Mammary epithelial cell (primary cell): ENCODE measurements at regions of chr5 and their contacts with region 1.

Region 1: GRCh38 chr5:82413302-82414040 is 135.3 kb upstream of the RPS23 start:
- DNase-seq: peak; percentile 92
- H3K4me3 ChIP-seq: no peak overlapping the region
- H3K27ac ChIP-seq: peak overlapping the region; percentile 72
- H3K4me1 ChIP-seq: peaks cover 28% of the 10 kb centered on the region
- H3K27me3 ChIP-seq: no peaks in the 10 kb centered on the region
- CTCF ChIP-seq: no peak

Region 2: DNA sequence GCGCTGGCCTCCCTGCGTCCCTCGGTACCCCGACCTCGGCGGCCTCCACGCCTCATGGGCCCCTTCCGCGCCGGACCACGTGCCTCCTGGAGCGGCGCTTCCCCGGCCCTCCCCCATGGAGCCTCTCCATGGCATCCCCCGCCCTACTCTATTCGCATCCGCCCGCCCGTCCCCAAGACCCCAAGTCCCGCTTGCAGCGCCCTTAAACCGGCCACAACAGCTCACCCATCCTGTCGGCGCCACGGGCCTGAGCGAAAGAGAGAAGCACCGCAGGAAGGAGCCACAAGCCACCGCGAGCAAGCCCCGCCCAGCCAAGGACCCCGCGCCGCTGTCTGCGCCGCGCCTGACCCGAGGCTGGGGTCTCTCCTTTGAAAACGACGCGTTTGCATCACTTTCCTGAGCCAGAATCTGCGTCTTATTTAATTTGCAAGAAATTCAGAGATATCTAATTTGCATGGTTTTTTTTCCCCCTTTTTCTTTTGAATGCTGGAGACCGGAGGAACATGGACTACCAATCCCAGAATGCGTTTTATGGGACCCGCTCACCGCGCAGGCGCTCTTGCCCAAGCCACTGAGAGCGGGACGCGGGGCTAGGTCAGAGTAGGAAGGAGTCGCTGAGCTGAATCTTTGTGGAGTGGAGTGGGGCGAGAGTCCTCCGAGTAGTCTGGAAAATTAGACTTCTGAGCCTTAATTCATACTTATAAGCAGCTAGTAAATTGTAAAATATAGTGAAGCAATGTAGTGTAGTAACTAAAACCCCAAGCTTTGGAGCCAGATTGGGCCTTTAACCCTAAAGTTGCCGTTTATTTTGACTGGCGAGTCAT is 135.2 kb before region 1 on chr5 and contains the start of gene RPS23:
- CTCF ChIA-PET with region 1: no interaction called
- dilution Hi-C with region 1: no loop called
- in situ Hi-C with region 1: no loop called
- intact Hi-C with region 1: no loop called
- DNase-seq: peak; percentile 86
- H3K4me3 ChIP-seq: peak within 1 kb of the TSS; percentile 60 to 98 (median 97)
- H3K27ac ChIP-seq: peak within 1 kb of the TSS; percentile 93
- H3K4me1 ChIP-seq: peaks cover 19% of the 10 kb centered on the region
- H3K27me3 ChIP-seq: no peaks in the 10 kb centered on the region
- CTCF ChIP-seq: no peak
- total RNA-seq, gene RPS23: 1,263 to 1,505 TPM

Region 3: GRCh38 chr5:82356808-82357671 is 56.4 kb before region 1 on chr5:
- CTCF ChIA-PET with region 1: no interaction called
- dilution Hi-C with region 1: loop called (anchors 5 kb)
- in situ Hi-C with region 1: no loop called
- intact Hi-C with region 1: no loop called
- DNase-seq: peak; percentile 99
- H3K4me3 ChIP-seq: no peak overlapping the region
- H3K27ac ChIP-seq: peak overlapping the region; percentile 73
- H3K4me1 ChIP-seq: peaks cover 11% of the 10 kb centered on the region
- H3K27me3 ChIP-seq: no peaks in the 10 kb centered on the region
- CTCF ChIP-seq: no peak

Region 4: GRCh38 chr5:82466986-82467561 is 53.6 kb after region 1 on chr5:
- CTCF ChIA-PET with region 1: no interaction called
- dilution Hi-C with region 1: no loop called
- in situ Hi-C with region 1: no loop called
- intact Hi-C with region 1: no loop called
- DNase-seq: no peak
- H3K4me3 ChIP-seq: no peak overlapping the region
- H3K27ac ChIP-seq: no peak overlapping the region
- H3K4me1 ChIP-seq: no peaks in the 10 kb centered on the region
- H3K27me3 ChIP-seq: no peaks in the 10 kb centered on the region
- CTCF ChIP-seq: no peak

Region 5: DNA sequence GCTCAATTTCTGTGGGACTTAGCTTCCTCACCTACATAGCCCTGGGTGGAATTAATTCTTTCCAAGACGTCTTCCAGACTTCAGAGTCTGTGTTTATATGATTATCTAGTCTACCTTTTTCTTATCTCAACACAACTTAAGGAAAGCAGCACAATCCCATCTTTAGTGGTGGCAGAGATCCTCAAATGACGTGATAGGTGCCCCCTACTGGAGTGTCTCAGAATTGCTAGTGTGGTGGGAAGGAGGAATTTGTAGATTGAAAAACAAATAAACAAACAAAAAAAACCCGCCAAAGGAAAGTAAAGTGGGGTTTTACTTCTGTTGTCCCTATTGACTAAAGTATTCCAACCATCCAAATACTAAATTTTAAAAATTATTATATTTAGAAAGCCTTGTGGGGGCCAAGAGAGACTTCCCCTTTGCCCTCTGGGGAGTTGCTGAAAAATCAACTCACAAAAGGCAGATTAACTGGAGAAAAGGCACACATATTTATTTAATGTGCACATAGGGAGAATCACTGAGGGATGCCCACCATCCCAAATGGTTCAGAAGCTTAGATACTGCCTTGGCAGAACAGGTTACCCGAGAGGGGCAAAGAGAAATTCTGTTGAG is 380.4 kb after region 1 on chr5:
- CTCF ChIA-PET with region 1: no interaction called
- dilution Hi-C with region 1: no loop called
- in situ Hi-C with region 1: no loop called
- intact Hi-C with region 1: no loop called
- DNase-seq: no peak
- H3K4me3 ChIP-seq: no peak overlapping the region
- H3K27ac ChIP-seq: no peak overlapping the region
- H3K4me1 ChIP-seq: peaks cover 3% of the 10 kb centered on the region
- H3K27me3 ChIP-seq: no peaks in the 10 kb centered on the region
- CTCF ChIP-seq: peak; percentile 73 to 74

Region 6: GRCh38 chr5:83133797-83134196 is 720.3 kb after region 1 on chr5:
- CTCF ChIA-PET with region 1: no interaction called
- dilution Hi-C with region 1: no loop called
- in situ Hi-C with region 1: no loop called
- intact Hi-C with region 1: no loop called
- DNase-seq: no peak
- H3K4me3 ChIP-seq: no peak overlapping the region
- H3K27ac ChIP-seq: no peak overlapping the region
- H3K4me1 ChIP-seq: no peaks in the 10 kb centered on the region
- H3K27me3 ChIP-seq: no peaks in the 10 kb centered on the region
- CTCF ChIP-seq: no peak